CD8-positive, alpha-beta T cell (primary cell): ENCODE measurements at regions of chr13 and their contacts with region 1.

Region 1: DNA sequence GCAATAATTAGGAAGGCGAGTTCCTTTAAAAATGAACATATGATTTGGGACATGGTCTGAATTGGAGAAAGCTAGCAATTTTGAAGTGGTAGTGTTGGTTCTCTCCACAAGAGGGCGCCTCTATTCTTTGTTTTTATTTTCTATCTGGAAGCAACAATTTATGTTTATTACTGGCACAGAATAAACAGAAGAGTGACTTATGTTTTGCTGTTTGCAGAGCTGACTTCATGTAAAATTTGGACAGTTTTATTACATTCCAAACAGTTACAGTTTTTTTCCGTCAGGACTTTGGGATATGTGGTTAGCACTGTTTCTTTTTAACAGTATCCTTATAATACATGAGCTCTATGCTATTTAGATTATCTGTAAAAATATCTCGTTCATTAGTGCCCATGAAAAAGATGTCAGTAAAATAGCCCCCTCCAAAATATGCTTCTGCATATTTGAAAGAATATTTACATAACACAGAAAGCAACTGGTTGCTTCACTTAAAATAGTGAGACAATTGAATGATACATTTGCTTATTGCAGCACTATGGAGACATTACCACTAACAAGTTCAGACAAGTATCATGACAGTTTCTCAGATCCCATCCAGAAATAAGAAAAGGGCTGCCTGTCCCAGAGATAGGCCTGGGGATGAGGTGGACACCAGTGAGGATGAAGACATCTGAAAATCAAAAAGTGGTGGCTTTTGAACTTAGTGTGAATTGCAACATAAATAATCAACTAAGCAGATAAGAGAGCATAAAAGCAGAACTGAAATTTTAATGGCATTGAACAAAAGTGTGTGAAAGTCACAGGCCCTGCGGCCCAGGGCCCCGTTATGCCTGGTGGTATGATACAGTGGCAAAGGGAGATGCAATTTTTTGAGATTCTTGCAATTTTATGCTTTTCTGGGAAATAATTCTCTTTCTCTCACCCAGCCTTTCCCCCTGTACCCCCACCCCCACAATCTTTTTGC is 32.3 kb upstream of the FGF9 start:
- DNase-seq: peak in 6 of 9 experiments; percentile 5 to 57 (median 47)
- ATAC-seq: no peak
- H3K4me3 ChIP-seq: no peak overlapping the region
- H3K4me3 Mint-ChIP-seq: no peak overlapping the region
- H3K27ac ChIP-seq: no peak overlapping the region
- H3K27ac Mint-ChIP-seq: no peak overlapping the region
- H3K4me1 ChIP-seq: no peaks in the 10 kb centered on the region
- H3K4me1 Mint-ChIP-seq: no peaks in the 10 kb centered on the region
- H3K27me3 ChIP-seq: no peaks in the 10 kb centered on the region
- H3K27me3 Mint-ChIP-seq: peaks cover 6% of the 10 kb centered on the region
- CTCF ChIP-seq: peak; percentile 86

Region 2: GRCh38 chr13:21625366-21625765 is 13.2 kb before region 1 on chr13:
- CTCF ChIA-PET with region 1: interaction called, 33 read pairs
- POLR2A ChIA-PET with region 1: no interaction called
- intact Hi-C with region 1: no loop called
- DNase-seq: peak in 3 of 9 experiments; percentile 29 to 57 (median 47)
- ATAC-seq: no peak
- H3K4me3 ChIP-seq: no peak overlapping the region
- H3K4me3 Mint-ChIP-seq: no peak overlapping the region
- H3K27ac ChIP-seq: no peak overlapping the region
- H3K27ac Mint-ChIP-seq: no peak overlapping the region
- H3K4me1 ChIP-seq: no peaks in the 10 kb centered on the region
- H3K4me1 Mint-ChIP-seq: no peaks in the 10 kb centered on the region
- H3K27me3 ChIP-seq: no peaks in the 10 kb centered on the region
- H3K27me3 Mint-ChIP-seq: peaks cover 8% of the 10 kb centered on the region
- CTCF ChIP-seq: peak; percentile 17

Region 3: DNA sequence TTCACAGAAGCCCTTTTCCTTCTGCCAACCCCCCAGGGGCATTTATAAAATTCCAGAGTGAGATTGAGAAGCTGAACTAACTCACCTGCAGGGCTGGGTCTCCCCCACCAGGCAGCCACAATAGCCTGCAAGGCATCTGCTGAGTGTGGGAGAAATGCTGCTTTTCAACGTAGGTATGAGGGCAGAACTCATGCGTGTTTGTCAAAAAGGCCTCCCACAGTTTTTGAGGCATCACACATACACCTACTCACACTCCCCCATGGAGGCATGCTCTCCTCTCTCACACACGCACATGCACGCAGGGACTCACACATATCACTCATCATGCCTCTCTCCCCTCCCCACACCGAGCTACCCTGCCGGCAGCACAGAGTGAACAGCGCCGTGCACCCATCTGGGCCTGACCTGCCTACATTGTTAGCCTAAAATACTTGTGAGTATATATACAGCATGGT is 422.8 kb after region 1 on chr13:
- CTCF ChIA-PET with region 1: interaction called, 13 read pairs
- POLR2A ChIA-PET with region 1: no interaction called
- intact Hi-C with region 1: loop called in 1 of 2 experiments (anchors 1 kb)
- DNase-seq: peak; percentile 20 to 84 (median 54)
- ATAC-seq: peak; percentile 78
- H3K4me3 ChIP-seq: no peak overlapping the region
- H3K4me3 Mint-ChIP-seq: peak overlapping the region; percentile 19
- H3K27ac ChIP-seq: peak overlapping the region; percentile 77 to 90
- H3K27ac Mint-ChIP-seq: peak overlapping the region; percentile 94
- H3K4me1 ChIP-seq: peaks cover 66% of the 10 kb centered on the region
- H3K4me1 Mint-ChIP-seq: peaks cover 80% of the 10 kb centered on the region
- H3K27me3 ChIP-seq: no peaks in the 10 kb centered on the region
- H3K27me3 Mint-ChIP-seq: no peaks in the 10 kb centered on the region
- CTCF ChIP-seq: peak; percentile 20

Region 4: GRCh38 chr13:22278336-22278929 is 639.8 kb after region 1 on chr13:
- CTCF ChIA-PET with region 1: interaction called, 25 read pairs
- POLR2A ChIA-PET with region 1: no interaction called
- intact Hi-C with region 1: loop called (anchors 1 kb)
- DNase-seq: peak; percentile 53 to 83 (median 71)
- ATAC-seq: peak; percentile 56
- H3K4me3 ChIP-seq: no peak overlapping the region
- H3K4me3 Mint-ChIP-seq: no peak overlapping the region
- H3K27ac ChIP-seq: no peak overlapping the region
- H3K27ac Mint-ChIP-seq: no peak overlapping the region
- H3K4me1 ChIP-seq: no peaks in the 10 kb centered on the region
- H3K4me1 Mint-ChIP-seq: peaks cover 11% of the 10 kb centered on the region
- H3K27me3 ChIP-seq: no peaks in the 10 kb centered on the region
- H3K27me3 Mint-ChIP-seq: peaks cover 2% of the 10 kb centered on the region
- CTCF ChIP-seq: peak; percentile 44